Activated CD4-positive, alpha-beta memory T cell treated with anti-CD3 and anti-CD28 coated beads for 36 hours (primary cell): ENCODE measurements at regions of chr16 and their contacts with region 1.

Region 1: DNA sequence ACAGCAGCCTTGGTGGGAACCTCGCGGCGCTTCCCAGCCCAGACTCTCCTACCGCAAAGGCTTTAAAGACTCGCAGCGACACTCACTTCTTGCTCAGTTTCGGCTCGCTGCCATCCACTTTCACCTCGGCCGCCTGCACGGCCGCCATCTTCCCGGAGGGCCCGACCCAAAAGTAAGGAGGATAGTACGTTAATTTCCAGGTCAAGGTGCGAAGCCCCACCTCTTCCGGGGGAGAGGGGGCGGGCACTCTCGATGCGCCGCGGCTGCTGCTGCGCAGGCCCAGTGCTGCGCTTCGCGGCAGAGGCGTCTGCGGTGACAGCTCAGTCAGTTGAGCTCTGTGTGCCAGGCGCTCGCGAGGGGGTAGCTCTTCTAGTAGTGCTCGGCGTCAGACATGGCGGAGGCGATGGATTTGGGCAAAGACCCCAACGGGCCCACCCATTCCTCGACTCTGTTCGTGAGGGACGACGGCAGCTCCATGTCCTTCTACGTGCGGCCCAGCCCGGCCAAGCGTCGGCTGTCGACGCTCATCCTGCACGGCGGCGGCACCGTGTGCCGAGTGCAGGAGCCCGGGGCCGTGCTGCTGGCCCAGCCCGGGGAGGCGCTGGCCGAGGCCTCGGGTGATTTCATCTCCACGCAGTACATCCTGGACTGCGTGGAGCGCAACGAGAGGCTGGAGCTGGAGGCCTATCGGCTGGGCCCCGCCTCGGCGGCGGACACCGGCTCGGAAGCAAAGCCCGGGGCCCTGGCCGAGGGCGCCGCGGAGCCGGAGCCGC is at the starts of genes KARS1 and TERF2IP:
- DNase-seq: peak; percentile 97
- H3K4me3 Mint-ChIP-seq: peak within 1 kb of the TSS; percentile 94
- H3K27ac Mint-ChIP-seq: peak within 1 kb of the TSS; percentile 98
- H3K4me1 Mint-ChIP-seq: peaks cover 54% of the 10 kb centered on the region
- H3K27me3 Mint-ChIP-seq: no peaks in the 10 kb centered on the region
- total RNA-seq, gene KARS1: 273 to 277 TPM
- total RNA-seq, gene TERF2IP: 80.3 to 85.1 TPM

Region 2: DNA sequence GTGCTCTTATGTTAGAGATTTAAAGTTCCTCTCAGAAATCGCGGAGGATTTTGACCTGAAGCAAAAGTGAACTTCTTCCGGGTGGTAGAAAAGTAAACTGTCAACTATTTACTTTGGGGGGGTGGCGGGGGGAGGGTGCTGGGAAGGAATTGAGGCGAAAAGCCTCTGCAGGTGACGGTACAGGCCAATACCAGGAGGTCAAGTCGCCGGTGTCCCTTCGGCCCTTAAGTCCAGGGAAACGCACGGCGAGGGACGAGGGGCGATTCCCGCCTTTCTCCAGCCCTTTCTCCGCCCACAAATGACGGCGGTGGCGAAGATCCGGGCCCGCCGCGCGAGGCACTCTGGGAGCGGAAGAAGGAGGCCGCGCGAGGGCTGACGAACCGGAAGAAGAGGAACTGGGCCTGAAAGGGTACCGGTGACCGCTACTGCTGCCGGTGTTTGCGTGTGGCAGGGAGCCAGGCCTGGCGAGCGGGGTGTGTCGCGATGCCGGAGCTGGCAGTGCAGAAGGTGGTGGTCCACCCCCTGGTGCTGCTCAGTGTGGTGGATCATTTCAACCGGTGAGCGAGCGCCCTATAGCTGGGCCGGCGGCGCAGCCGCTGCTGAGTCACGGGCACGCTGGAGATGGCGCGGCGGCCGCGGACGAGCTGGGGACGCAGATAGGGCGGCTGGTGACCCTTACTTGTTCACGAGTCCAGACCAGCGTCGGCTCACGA is 1351.1 kb before region 1 on chr16 and contains the start of gene PSMD7:
- CTCF ChIA-PET with region 1: no interaction called
- POLR2A ChIA-PET with region 1: interaction called, 3 read pairs
- intact Hi-C with region 1: loop called (anchors 10 kb)
- DNase-seq: peak; percentile 94
- H3K4me3 Mint-ChIP-seq: peak within 1 kb of the TSS; percentile 87
- H3K27ac Mint-ChIP-seq: peak within 1 kb of the TSS; percentile 94
- H3K4me1 Mint-ChIP-seq: peaks cover 31% of the 10 kb centered on the region
- H3K27me3 Mint-ChIP-seq: no peaks in the 10 kb centered on the region
- total RNA-seq, gene PSMD7: 119 to 123 TPM

Region 3: GRCh38 chr16:75432828-75433731 is 214.6 kb before region 1 on chr16 and contains the start of gene CFDP1:
- CTCF ChIA-PET with region 1: interaction called, 3 read pairs
- POLR2A ChIA-PET with region 1: interaction called, 5 read pairs
- intact Hi-C with region 1: loop called (anchors 1 kb)
- DNase-seq: peak; percentile 96
- H3K4me3 Mint-ChIP-seq: peak within 1 kb of the TSS; percentile 90
- H3K27ac Mint-ChIP-seq: peak within 1 kb of the TSS; percentile 87
- H3K4me1 Mint-ChIP-seq: peaks cover 32% of the 10 kb centered on the region
- H3K27me3 Mint-ChIP-seq: no peaks in the 10 kb centered on the region
- total RNA-seq, gene CFDP1: 37.6 to 41.3 TPM

Region 4: GRCh38 chr16:75456971-75457370 is 190.7 kb before region 1 on chr16:
- CTCF ChIA-PET with region 1: no interaction called
- POLR2A ChIA-PET with region 1: no interaction called
- intact Hi-C with region 1: no loop called
- DNase-seq: no peak
- H3K4me3 Mint-ChIP-seq: no peak overlapping the region
- H3K27ac Mint-ChIP-seq: no peak overlapping the region
- H3K4me1 Mint-ChIP-seq: peaks cover 46% of the 10 kb centered on the region
- H3K27me3 Mint-ChIP-seq: no peaks in the 10 kb centered on the region

Region 5: DNA sequence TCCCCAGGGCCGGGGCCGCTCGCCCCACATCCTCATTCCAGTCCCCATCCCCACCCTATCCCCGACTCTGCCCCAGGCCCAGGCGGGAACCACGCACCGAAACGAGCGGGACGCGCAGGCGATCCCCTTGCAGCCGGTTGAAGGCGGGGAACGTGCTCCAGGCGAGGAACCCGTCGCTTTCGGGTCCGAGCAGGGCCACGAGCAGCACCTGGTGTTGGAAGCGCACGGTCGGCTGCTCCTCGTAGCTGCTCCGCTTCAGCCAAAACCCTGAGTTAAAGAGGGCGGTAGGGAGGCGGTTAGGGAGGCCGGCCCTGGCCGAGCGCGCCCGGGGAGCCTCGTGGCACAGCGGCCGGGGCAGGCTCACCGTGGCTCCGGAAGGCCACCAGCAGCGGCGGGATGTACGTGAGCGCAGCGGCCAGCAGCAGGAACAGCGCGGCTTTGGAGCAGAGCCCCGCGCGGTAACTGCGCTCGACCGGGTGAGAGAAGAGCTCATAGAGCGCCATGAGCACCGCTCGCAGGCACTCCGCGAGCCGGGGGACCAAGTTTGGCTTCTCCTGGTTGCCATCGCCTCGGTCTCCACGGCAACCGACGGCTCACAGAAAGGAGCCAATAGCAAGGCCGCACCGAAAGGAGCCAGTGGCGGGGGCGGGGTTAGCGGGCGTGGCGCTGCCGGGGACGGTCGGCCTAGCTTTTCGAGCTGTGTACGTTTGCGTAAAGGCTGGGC is 91.8 kb before region 1 on chr16 and contains the start of gene TMEM231:
- CTCF ChIA-PET with region 1: interaction called, 3 read pairs
- POLR2A ChIA-PET with region 1: interaction called, 4 read pairs
- intact Hi-C with region 1: loop called (anchors 1 kb)
- DNase-seq: peak; percentile 98
- H3K4me3 Mint-ChIP-seq: peak within 1 kb of the TSS; percentile 88
- H3K27ac Mint-ChIP-seq: peak within 1 kb of the TSS; percentile 85
- H3K4me1 Mint-ChIP-seq: peaks cover 3% of the 10 kb centered on the region
- H3K27me3 Mint-ChIP-seq: peaks cover 4% of the 10 kb centered on the region
- total RNA-seq, gene TMEM231: 4.6 to 5.3 TPM

Region 6: GRCh38 chr16:75593825-75594820 is 53.6 kb before region 1 on chr16:
- CTCF ChIA-PET with region 1: no interaction called
- POLR2A ChIA-PET with region 1: no interaction called
- intact Hi-C with region 1: no loop called
- DNase-seq: peak; percentile 36
- H3K4me3 Mint-ChIP-seq: no peak overlapping the region
- H3K27ac Mint-ChIP-seq: peak overlapping the region; percentile 65
- H3K4me1 Mint-ChIP-seq: peaks cover 14% of the 10 kb centered on the region
- H3K27me3 Mint-ChIP-seq: no peaks in the 10 kb centered on the region

Region 7: DNA sequence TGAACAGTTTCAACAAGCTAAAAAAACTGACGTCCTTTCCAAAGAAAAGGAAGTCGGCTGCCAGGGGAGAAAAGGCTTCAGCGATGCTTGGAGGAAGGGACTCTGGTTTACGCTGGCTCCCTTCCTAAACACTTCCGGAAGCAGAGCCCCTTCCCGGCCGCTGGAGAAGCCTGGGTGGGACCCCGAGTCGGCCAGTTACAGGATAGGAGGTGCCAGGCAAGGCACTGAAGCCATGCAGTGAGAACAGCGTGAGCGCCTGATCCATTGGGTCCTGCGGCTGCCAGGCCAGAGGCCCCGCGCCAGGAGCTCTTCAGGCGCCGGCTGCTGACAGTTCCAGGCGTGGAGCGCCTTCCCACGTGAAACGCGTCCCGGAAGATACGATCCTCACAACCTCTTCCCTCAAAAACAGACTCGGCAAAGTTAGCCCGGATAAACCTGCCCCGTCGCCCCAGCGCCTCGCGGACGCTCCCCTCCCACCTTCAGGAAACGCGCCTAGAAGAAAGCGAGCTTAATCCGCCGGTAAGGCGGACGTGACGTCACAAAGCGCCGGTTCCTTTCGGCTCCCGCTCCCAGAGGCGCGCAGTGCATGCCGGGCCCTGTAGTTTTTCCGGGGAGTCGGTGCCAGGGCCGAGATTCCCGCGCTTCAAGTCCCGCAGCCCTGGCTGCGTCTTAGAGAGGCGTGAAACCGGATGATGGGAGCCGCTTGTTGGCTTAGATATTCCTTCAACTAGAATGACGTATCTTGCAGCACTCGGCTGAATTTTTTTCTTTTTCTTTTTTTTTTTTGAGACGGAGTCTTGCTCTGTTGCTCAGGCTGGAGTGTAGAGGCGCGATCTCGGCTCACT is 24.7 kb before region 1 on chr16 and contains the start of gene ADAT1:
- CTCF ChIA-PET with region 1: interaction called, 35 read pairs
- POLR2A ChIA-PET with region 1: interaction called, 83 read pairs
- intact Hi-C with region 1: loop called (anchors 1 kb)
- DNase-seq: peak; percentile 99
- H3K4me3 Mint-ChIP-seq: peak within 1 kb of the TSS; percentile 96
- H3K27ac Mint-ChIP-seq: peak within 1 kb of the TSS; percentile 97
- H3K4me1 Mint-ChIP-seq: peaks cover 52% of the 10 kb centered on the region
- H3K27me3 Mint-ChIP-seq: no peaks in the 10 kb centered on the region
- total RNA-seq, gene ADAT1: 39.9 to 40.2 TPM

Region 8: DNA sequence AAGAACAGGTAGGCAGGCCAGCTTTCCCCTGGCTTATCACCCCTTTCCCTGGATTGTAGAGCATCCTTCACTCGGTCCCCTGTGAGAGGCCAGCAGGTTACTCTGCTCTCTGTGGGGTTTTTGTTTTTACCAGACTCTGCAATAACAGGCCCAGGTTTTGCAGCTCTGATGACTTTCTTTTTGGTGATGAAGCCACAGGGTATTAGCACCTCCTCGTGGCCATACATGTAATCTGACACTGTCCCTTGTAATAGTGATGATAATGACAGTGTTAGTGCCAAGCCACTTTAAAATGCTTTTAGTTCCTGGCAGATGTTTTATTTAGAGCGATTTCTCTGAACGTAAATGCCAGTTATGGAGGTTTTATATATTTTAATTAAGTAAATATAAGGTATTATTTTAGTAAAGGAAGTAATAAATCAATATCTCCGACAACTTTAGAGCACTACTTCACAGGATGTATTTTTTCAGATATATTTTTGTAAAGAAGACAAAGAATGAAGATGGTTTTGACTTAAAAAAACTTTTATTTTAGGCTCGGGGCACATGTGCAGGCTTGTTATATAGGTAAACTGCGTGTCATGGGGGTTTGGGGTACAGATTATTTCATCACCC is 116.6 kb after region 1 on chr16:
- CTCF ChIA-PET with region 1: interaction called, 14 read pairs
- POLR2A ChIA-PET with region 1: interaction called, 3 read pairs
- intact Hi-C with region 1: loop called (anchors 2 kb)
- DNase-seq: peak; percentile 70
- H3K4me3 Mint-ChIP-seq: no peak overlapping the region
- H3K27ac Mint-ChIP-seq: no peak overlapping the region
- H3K4me1 Mint-ChIP-seq: peaks cover 11% of the 10 kb centered on the region
- H3K27me3 Mint-ChIP-seq: peaks cover 4% of the 10 kb centered on the region